Right cardiac atrium (tissue), 5 donors: ENCODE measurements at regions of chr1 and their contacts with region 1.

Region 1: GRCh38 chr1:225493591-225494246 is 65.9 kb upstream of the LBR start:
- DNase-seq: no peak
- ATAC-seq: no peak
- H3K4me3 ChIP-seq: no peak overlapping the region
- H3K27ac ChIP-seq: no peak overlapping the region
- H3K4me1 ChIP-seq: no peaks in the 10 kb centered on the region
- H3K27me3 ChIP-seq: no peaks in the 10 kb centered on the region

Region 2: GRCh38 chr1:225506727-225507126 is 13.0 kb after region 1 on chr1:
- intact Hi-C with region 1: loop called in 1 of 4 experiments (anchors 2 kb)
- DNase-seq: no peak
- ATAC-seq: no peak
- H3K4me3 ChIP-seq: no peak overlapping the region
- H3K27ac ChIP-seq: no peak overlapping the region
- H3K4me1 ChIP-seq: no peaks in the 10 kb centered on the region
- H3K27me3 ChIP-seq: no peaks in the 10 kb centered on the region

Region 3: GRCh38 chr1:225578251-225578950 is 84.7 kb after region 1 on chr1:
- intact Hi-C with region 1: no loop called
- DNase-seq: no peak
- ATAC-seq: no peak
- H3K4me3 ChIP-seq: no peak overlapping the region
- H3K27ac ChIP-seq: peak overlapping the region; percentile 3
- H3K4me1 ChIP-seq: peaks cover 7% of the 10 kb centered on the region
- H3K27me3 ChIP-seq: no peaks in the 10 kb centered on the region

Region 4: GRCh38 chr1:225896937-225897549 is 403.3 kb after region 1 on chr1:
- intact Hi-C with region 1: no loop called
- DNase-seq: peak in 1 of 3 donors; percentile 17
- ATAC-seq: peak; percentile 37 to 64
- H3K4me3 ChIP-seq: no peak overlapping the region
- H3K27ac ChIP-seq: no peak overlapping the region
- H3K4me1 ChIP-seq: peaks cover 2% of the 10 kb centered on the region
- H3K27me3 ChIP-seq: no peaks in the 10 kb centered on the region